ENCODE measurements at regions of chr7 and their contacts with region 1.

Region 1: DNA sequence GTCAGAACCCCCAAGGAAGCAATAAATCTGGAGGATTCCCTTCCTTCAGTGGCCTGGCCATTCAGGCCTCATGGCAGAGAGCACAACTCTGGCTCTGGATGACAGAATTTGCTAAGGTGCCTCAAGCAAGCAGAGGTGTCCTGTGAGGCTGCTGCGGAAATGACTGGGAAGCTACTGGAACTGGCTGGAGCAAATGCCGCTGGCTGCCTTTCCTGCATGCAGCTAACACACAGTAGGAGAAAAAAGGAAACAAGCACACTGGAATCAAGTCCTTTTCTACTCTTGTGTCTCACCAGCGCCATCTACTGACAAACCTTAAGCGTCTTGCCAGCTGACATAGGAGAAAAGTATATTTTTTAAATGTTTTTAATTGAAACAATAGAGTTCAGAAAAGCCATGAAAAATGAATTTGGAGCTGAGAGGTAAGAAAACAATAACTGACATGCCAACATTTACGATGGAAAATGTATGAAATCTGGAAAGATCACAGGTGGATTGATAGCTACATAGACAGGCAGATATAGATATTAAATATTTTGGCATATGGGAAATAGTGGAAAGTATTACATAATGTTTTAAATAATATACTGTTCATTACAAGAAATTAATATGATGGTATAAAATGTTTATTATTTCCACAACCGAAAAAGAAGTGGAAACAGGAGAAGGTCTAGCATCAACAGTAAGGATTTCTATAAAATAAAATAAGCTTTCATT is 951.6 kb downstream of the ANKRD7 start:
- DNase-seq: no peak
- ATAC-seq: no peak

Region 2: DNA sequence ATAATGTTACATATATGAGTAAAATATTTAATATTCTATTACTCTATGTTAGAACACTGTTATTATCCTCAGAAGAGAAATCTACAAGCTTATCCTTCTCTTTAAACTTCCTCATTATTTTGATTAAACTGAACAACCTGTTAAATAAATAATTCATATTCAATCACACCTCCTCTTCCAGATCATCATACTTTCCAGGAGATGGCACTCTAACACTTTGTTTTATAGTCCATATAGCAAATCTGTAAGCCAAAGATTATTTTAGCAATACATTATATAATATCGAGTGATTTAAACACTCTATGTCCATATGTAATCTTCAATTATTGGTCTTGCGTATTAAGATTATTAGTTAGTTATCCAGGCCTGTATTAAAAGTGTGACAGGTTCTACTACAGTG is 257.5 kb before region 1 on chr7:
- intact Hi-C with region 1: loop called (anchors 5 kb)
- DNase-seq: no peak
- ATAC-seq: no peak

Measured in Right ventricle myocardium inferior (tissue), 1 donor.